Activated CD8-positive, alpha-beta T cell treated with anti-CD3 and anti-CD28 coated beads for 36 hours (primary cell): ENCODE measurements at regions of chr1 and their contacts with region 1.

Region 1: GRCh38 chr1:160837558-160838205 is 25.0 kb downstream of the CD244 start:
- DNase-seq: peak; percentile 92
- ATAC-seq: peak; percentile 90
- H3K4me3 Mint-ChIP-seq: peak overlapping the region; percentile 57
- H3K27ac Mint-ChIP-seq: peak overlapping the region; percentile 99
- H3K4me1 Mint-ChIP-seq: peaks cover 72% of the 10 kb centered on the region
- H3K27me3 Mint-ChIP-seq: no peaks in the 10 kb centered on the region
- CTCF ChIP-seq: peak; percentile 44

Region 2: GRCh38 chr1:160675641-160676410 is 161.9 kb before region 1 on chr1:
- CTCF ChIA-PET with region 1: interaction called, 10 read pairs
- POLR2A ChIA-PET with region 1: no interaction called
- intact Hi-C with region 1: no loop called
- DNase-seq: peak; percentile 88
- ATAC-seq: peak; percentile 85
- H3K4me3 Mint-ChIP-seq: no peak overlapping the region
- H3K27ac Mint-ChIP-seq: peak overlapping the region; percentile 73
- H3K4me1 Mint-ChIP-seq: peaks cover 30% of the 10 kb centered on the region
- H3K27me3 Mint-ChIP-seq: no peaks in the 10 kb centered on the region
- CTCF ChIP-seq: peak; percentile 73

Region 3: DNA sequence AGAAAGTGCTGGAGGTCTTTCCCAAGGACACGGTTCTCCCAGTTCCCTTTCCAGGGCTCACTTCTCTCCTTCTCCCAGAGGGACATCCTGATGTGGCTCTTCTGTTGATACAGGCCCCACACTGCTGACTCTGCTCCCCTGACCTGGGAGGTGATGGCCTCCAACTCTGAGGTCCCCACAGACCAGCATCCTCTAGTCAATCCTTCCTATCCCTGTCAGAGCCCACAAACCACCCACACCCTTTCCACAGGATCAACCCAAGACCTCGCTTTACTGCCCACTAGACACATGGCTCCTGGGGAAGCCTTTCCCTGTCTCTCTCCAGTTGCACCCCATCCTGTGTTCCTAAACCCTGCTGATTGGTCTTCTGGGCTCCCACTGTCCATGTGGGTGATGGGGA is 87.1 kb before region 1 on chr1:
- CTCF ChIA-PET with region 1: no interaction called
- POLR2A ChIA-PET with region 1: no interaction called
- intact Hi-C with region 1: no loop called
- DNase-seq: no peak
- ATAC-seq: no peak
- H3K4me3 Mint-ChIP-seq: no peak overlapping the region
- H3K27ac Mint-ChIP-seq: peak overlapping the region; percentile 94
- H3K4me1 Mint-ChIP-seq: peaks cover 87% of the 10 kb centered on the region
- H3K27me3 Mint-ChIP-seq: no peaks in the 10 kb centered on the region
- CTCF ChIP-seq: no peak

Region 4: GRCh38 chr1:160795951-160796383 is 41.7 kb before region 1 on chr1 and contains the start of gene LY9:
- CTCF ChIA-PET with region 1: interaction called, 47 read pairs
- POLR2A ChIA-PET with region 1: interaction called, 10 read pairs
- intact Hi-C with region 1: no loop called
- DNase-seq: peak; percentile 93
- ATAC-seq: peak; percentile 77
- H3K4me3 Mint-ChIP-seq: peak within 1 kb of the TSS; percentile 87
- H3K27ac Mint-ChIP-seq: peak within 1 kb of the TSS; percentile 95
- H3K4me1 Mint-ChIP-seq: peaks cover 49% of the 10 kb centered on the region
- H3K27me3 Mint-ChIP-seq: no peaks in the 10 kb centered on the region
- CTCF ChIP-seq: no peak
- total RNA-seq, gene LY9: 19.1 to 19.5 TPM

Region 5: DNA sequence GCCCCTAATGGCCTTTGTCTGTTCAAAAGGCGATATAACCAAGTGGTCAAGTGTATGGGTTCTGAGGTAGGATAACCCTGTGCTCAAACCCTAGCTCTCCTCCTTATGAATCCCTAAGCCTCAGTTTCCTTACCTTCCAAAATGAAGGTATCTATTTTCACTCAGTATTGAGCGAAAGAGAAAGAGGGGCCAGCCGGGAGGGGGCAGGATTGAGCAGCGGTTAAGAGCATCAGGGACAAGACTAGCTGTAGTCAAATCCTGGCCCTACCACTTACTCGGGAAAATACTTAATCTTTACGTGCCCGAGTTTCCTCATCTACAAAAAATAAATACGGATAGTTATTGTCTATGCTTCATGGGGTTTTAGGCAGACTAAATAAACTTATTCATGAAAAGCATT is 16.1 kb before region 1 on chr1:
- CTCF ChIA-PET with region 1: interaction called, 16 read pairs
- POLR2A ChIA-PET with region 1: interaction called, 4 read pairs
- intact Hi-C with region 1: no loop called
- DNase-seq: peak; percentile 37
- ATAC-seq: no peak
- H3K4me3 Mint-ChIP-seq: no peak overlapping the region
- H3K27ac Mint-ChIP-seq: no peak overlapping the region
- H3K4me1 Mint-ChIP-seq: peaks cover 5% of the 10 kb centered on the region
- H3K27me3 Mint-ChIP-seq: no peaks in the 10 kb centered on the region
- CTCF ChIP-seq: no peak

Region 6: GRCh38 chr1:160862203-160863060 is 24.8 kb after region 1 on chr1 and contains the start of gene CD244:
- CTCF ChIA-PET with region 1: interaction called, 39 read pairs
- POLR2A ChIA-PET with region 1: interaction called, 4 read pairs
- intact Hi-C with region 1: no loop called
- DNase-seq: peak; percentile 86
- ATAC-seq: peak; percentile 95
- H3K4me3 Mint-ChIP-seq: peak within 1 kb of the TSS; percentile 58
- H3K27ac Mint-ChIP-seq: peak within 1 kb of the TSS; percentile 67
- H3K4me1 Mint-ChIP-seq: peaks cover 32% of the 10 kb centered on the region
- H3K27me3 Mint-ChIP-seq: no peaks in the 10 kb centered on the region
- CTCF ChIP-seq: no peak
- total RNA-seq, gene CD244: 1.4 to 1.8 TPM

Region 7: GRCh38 chr1:160987359-160988062 is 149.8 kb after region 1 on chr1:
- CTCF ChIA-PET with region 1: interaction called, 16 read pairs
- POLR2A ChIA-PET with region 1: no interaction called
- intact Hi-C with region 1: no loop called
- DNase-seq: no peak
- ATAC-seq: no peak
- H3K4me3 Mint-ChIP-seq: no peak overlapping the region
- H3K27ac Mint-ChIP-seq: no peak overlapping the region
- H3K4me1 Mint-ChIP-seq: peaks cover 2% of the 10 kb centered on the region
- H3K27me3 Mint-ChIP-seq: peaks cover under 1% of the 10 kb centered on the region
- CTCF ChIP-seq: no peak